GM23248 (cell line): ENCODE measurements at regions of chr1 and their contacts with region 1.

Region 1: GRCh38 chr1:156866249-156866909 is 5.7 kb downstream of the NTRK1 start:
- DNase-seq: no peak
- H3K4me3 ChIP-seq: no peak overlapping the region
- H3K27ac ChIP-seq: no peak overlapping the region
- H3K4me1 ChIP-seq: peaks cover 17% of the 10 kb centered on the region
- H3K27me3 ChIP-seq: peaks cover 8% of the 10 kb centered on the region

Region 2: DNA sequence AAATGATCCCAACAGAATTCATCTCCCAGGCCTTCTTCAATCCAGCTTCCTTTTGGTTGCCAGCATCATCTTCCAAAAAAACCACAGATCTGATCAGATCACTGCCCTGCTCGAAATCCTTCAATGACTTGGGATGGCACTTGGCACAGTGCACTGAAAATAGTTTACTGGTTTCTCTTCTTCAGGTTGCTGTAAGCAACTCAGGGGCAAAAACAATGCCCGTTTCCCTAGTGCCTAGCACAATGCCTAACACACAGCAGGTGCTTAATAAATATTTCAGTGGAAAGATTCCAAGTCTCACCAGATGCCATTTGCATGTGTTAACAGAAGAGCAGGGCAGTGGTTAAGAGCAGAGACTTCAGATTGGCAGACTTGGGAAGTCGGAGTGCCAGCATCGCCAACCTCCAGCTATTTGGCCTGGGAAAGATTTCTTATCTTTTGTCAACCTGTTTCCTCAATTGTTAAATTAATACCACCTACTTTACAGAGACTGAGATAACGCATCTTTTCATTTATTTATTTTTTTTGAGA is 149.0 kb before region 1 on chr1:
- in situ Hi-C with region 1: loop called (anchors 5 kb)
- DNase-seq: no peak
- H3K4me3 ChIP-seq: no peak overlapping the region
- H3K27ac ChIP-seq: no peak overlapping the region
- H3K4me1 ChIP-seq: peaks cover 16% of the 10 kb centered on the region
- H3K27me3 ChIP-seq: no peaks in the 10 kb centered on the region

Region 3: DNA sequence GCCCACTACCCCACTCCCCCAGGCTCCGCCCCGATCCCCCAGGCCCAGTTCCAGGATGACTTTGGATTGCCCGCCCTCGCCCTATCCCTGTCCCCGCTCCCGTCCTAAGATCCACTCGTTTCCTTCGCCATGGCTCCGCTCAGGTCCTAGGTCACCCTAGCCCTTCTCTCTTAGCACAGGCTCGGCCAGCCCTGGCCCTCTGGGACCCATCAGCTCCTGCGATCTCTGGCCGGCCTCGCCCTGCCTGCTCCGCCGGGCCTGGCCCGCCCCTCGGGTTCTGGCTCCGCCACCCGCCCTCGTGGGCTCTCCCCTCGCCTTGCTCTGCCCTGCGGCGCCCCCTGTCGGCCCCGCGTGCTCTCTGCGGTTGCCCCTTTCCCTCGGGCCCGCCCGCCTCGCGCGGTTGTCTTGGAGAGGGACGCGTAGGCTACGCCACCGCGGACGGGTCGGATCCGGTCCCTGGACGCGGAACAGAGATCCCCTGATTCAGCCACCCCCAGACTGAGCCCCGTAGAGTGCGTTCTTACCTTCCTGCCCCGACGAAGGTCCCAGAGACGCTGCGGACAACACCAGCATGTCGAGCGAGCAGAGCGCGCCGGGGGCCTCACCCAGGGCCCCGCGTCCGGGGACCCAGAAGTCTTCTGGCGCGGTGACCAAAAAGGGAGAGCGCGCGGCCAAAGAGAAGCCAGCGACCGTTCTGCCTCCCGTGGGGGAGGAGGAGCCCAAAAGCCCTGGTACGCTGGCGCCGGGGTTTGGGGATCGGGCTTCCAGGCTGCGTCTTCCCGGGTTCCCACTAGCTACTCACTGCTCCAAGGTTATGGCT is 54.1 kb after region 1 on chr1 and contains the start of gene LRRC71:
- in situ Hi-C with region 1: no loop called
- DNase-seq: peak; percentile 93
- H3K4me3 ChIP-seq: peak within 1 kb of the TSS; percentile 71
- H3K27ac ChIP-seq: no peak within 1 kb of the TSS
- H3K4me1 ChIP-seq: no peaks in the 10 kb centered on the region
- H3K27me3 ChIP-seq: peaks cover 39% of the 10 kb centered on the region
- total RNA-seq, gene LRRC71: 0.32 TPM in 1 of 2 replicates, not detected in the other